ENCODE measurements at regions of chr19 and their contacts with region 1.

Region 1: DNA sequence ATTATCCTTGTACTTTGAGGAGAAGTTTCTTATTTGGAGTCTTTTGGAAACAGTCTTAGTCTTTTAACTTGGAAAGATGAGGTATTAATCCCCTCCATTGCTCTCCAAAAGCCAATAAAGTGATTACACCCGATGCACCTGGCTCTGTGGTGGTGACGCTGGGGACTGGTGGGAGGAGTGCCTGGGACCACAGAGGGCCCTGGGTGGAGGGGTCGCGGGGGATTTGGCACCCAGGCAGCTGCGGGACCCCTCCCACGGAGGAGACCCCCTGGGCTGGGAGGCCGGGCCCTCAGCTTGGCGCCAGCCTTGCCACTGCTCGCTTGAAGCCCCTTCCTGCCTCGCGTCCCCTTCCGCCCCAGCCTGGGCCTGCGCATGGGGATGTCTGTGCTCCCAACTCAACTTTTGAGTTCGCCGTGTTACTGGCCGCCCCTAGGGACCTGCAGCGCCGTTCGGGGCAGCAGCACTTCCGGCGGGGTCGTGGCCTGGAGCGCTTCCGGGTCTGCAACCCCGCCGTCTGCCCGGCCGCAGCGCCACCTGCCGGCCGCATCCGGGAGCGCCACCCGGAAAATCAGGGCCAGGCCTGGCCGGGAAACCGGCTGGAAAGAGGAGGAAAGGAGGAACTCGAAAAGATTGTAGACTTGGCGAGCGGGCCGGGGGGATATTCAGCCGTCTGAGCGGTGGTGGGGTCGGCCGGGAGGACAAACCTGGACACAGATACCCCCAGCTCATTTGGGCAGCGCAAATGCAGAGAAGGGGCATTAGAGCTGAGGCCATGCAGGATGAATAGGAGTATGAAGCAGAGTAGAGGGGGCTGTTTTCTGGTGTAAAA is 8.4 kb downstream of the PEAK3 start:
- DNase-seq: peak; percentile 83
- H3K4me3 Mint-ChIP-seq: peak overlapping the region; percentile 95
- H3K27ac Mint-ChIP-seq: peak overlapping the region; percentile 94
- H3K4me1 Mint-ChIP-seq: peaks cover 17% of the 10 kb centered on the region
- H3K27me3 Mint-ChIP-seq: no peaks in the 10 kb centered on the region
- CTCF ChIP-seq: peak; percentile 76

Region 2: DNA sequence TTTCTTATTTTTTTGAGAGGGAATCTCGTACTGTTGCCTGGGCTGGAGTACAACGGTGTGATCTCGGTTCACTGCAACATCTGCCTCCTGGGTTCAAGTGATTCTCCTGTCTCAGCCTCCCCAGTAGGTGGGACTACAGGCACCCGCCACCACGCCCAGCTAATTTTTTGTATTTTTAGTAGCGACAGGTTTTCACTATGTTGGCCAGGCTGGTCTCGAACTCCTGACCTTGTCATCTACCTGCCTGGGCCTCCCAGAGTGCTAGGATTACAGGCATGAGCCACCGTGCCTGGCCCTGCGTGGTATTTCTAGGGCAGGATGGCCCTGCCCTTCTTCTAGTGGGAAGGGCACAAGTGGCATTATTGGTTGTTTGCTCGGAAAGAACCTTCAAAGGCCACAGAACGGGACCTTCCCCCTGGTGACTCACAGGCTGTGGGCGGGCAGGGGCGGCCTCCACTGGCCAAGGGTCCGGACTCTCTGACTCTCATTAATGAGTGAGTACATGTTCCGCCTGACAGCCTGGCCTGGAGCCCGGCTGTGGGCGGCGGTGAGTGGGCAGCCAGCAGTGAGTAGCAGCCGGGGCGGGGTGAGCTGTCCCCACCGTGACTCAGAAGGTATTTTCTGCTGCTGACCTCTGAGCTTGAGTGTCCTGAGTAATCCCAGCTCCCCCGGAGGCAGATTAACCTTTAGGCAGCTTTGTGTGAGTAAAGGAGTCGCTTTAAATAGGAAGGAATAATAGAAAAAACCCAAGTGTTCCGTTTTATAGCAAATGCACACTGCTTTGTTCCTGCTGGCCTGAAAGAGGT is 104.7 kb before region 1 on chr19:
- CTCF ChIA-PET with region 1: no interaction called
- intact Hi-C with region 1: no loop called
- DNase-seq: peak; percentile 94
- H3K4me3 Mint-ChIP-seq: peak overlapping the region; percentile 77
- H3K27ac Mint-ChIP-seq: peak overlapping the region; percentile 66
- H3K4me1 Mint-ChIP-seq: peaks cover 8% of the 10 kb centered on the region
- H3K27me3 Mint-ChIP-seq: no peaks in the 10 kb centered on the region
- CTCF ChIP-seq: no peak

Region 3: DNA sequence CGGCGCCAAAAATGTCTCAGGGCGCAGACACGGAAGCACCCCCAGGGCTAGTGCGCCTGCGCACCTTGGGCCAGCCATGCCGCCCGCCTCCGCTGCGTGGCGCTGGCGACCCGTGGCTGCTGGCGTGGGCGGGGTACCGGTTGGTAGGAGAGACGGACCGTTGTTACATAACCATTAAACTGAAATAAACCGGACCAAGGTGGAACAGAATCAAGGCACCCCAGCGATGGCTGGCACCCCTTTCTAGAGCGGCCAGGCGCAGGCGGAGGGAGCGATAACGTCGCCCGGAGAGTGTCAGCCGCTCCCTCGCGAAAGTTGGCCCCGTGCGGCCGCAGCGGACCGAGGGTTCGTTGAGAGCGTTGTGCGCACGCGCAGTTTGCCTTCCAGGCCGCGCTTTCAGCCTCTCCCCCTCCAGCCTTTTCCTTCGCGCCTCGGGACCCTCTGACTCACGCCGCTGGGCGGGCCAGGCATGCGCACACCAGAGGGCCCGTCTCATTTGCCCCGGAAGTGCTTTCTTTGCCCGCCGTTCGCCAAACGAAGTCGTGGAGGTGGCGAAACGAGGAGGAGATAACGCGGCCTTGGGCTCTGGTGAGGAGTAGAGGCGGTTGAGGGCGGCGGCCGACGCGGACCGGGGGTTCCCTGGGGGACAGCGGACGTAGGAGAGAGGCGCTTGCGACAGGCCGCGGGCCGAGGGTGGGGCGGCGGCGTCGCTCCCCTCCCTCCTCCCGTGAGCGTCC is 37.1 kb before region 1 on chr19 and contains the starts of genes PLEKHJ1 and SF3A2:
- CTCF ChIA-PET with region 1: interaction called, 4 read pairs
- intact Hi-C with region 1: loop called (anchors 5 kb)
- DNase-seq: peak; percentile 93
- H3K4me3 Mint-ChIP-seq: peak within 1 kb of the TSS; percentile 78
- H3K27ac Mint-ChIP-seq: peak within 1 kb of the TSS; percentile 90
- H3K4me1 Mint-ChIP-seq: peaks cover 33% of the 10 kb centered on the region
- H3K27me3 Mint-ChIP-seq: no peaks in the 10 kb centered on the region
- CTCF ChIP-seq: peak; percentile 87
- total RNA-seq, gene PLEKHJ1: 38.7 and 43.5 TPM in 2 replicates
- total RNA-seq, gene SF3A2: 83.0 and 83.6 TPM in 2 replicates

Region 4: GRCh38 chr19:2253106-2254053 is 20.2 kb before region 1 on chr19:
- CTCF ChIA-PET with region 1: no interaction called
- intact Hi-C with region 1: no loop called
- DNase-seq: no peak
- H3K4me3 Mint-ChIP-seq: peak overlapping the region; percentile 16
- H3K27ac Mint-ChIP-seq: no peak overlapping the region
- H3K4me1 Mint-ChIP-seq: no peaks in the 10 kb centered on the region
- H3K27me3 Mint-ChIP-seq: no peaks in the 10 kb centered on the region
- CTCF ChIP-seq: no peak

Measured in Calu3 (cell line).